T-cell (primary cell): ENCODE measurements at regions of chr1 and their contacts with region 1.

Region 1: DNA sequence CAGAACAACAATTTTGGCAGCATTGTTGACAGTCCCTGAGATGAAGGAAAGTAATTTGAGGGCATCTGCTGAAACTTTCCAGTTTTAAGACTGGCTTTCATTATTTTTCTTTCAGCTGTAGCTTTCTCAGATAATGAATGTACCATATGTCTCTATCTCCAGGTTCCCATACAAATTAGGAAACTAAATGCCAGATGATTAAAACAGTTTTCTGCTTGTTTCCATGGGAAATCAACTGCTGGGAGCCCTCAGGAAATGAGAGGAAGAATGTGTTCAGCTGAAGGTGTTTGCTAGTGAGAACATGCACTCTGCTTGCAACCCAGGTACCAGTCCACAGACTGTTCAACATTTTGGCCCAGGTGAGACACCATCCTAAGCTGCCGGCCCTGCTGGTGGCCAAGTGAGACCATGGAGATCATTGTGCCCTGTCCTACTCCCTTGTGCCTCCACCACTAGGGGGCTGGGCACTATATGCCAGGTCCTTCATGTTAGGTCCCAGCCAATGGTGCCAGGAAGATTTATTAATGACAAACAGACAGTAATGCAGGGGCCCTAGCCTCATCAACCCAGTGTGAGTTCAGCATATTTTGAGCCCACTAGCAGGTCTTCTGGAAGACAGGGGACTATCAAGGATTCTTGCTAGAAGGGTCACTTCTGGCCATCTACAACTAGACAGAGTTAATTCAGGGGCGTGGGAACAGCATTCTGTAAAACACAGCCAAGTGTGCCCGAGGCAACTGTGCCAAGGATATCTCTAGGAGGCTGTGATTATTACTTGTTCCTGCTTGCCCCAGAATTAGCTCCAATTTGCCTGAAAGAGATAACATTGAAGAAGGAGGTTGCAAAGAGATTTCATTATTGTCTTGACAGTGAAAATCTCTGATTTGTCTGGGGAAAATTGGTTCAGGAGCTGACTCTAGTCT is 17.0 kb upstream of the LRRC8C start:
- DNase-seq: peak in 3 of 35 experiments; percentile 7 to 49 (median 21)
- ATAC-seq: no peak
- H3K4me3 ChIP-seq: no peak overlapping the region
- H3K4me3 Mint-ChIP-seq: no peak overlapping the region
- H3K27ac ChIP-seq: no peak overlapping the region
- H3K27ac Mint-ChIP-seq: peak overlapping the region; percentile 67 to 72
- H3K4me1 ChIP-seq: peaks cover 26 to 29% of the 10 kb centered on the region in 2 experiments
- H3K4me1 Mint-ChIP-seq: peaks cover 80 to 88% (median 82%) of the 10 kb centered on the region in 3 donors
- H3K27me3 ChIP-seq: no peaks in the 10 kb centered on the region
- H3K27me3 Mint-ChIP-seq: no peaks in the 10 kb centered on the region

Region 2: GRCh38 chr1:89363638-89364536 is 252.1 kb before region 1 on chr1 and contains the start of gene GBP6:
- CTCF ChIA-PET with region 1: no interaction called
- POLR2A ChIA-PET with region 1: interaction called in 1 of 2 experiments, 16 read pairs
- DNase-seq: no peak
- ATAC-seq: no peak
- H3K4me3 ChIP-seq: no peak within 1 kb of the TSS
- H3K4me3 Mint-ChIP-seq: no peak within 1 kb of the TSS
- H3K27ac ChIP-seq: no peak within 1 kb of the TSS
- H3K27ac Mint-ChIP-seq: peak within 1 kb of the TSS; percentile 7 to 70
- H3K4me1 ChIP-seq: peaks cover 0 to 5% of the 10 kb centered on the region in 2 experiments
- H3K4me1 Mint-ChIP-seq: peaks cover 13 to 14% (median 14%) of the 10 kb centered on the region in 3 donors
- H3K27me3 ChIP-seq: no peaks in the 10 kb centered on the region
- H3K27me3 Mint-ChIP-seq: no peaks in the 10 kb centered on the region
- total RNA-seq, gene GBP6: 0.13 to 0.83 (median 0.18) TPM in 4 of 5 donors, not detected in the other

Region 3: GRCh38 chr1:89589515-89589914 is 26.4 kb before region 1 on chr1:
- CTCF ChIA-PET with region 1: interaction called, 4 to 6 read pairs
- POLR2A ChIA-PET with region 1: interaction called in 1 of 2 experiments, 10 read pairs
- DNase-seq: no peak
- ATAC-seq: no peak
- H3K4me3 ChIP-seq: no peak overlapping the region
- H3K4me3 Mint-ChIP-seq: no peak overlapping the region
- H3K27ac ChIP-seq: no peak overlapping the region
- H3K27ac Mint-ChIP-seq: peak overlapping the region; percentile 36 to 67
- H3K4me1 ChIP-seq: peaks cover 0 to 2% of the 10 kb centered on the region in 2 experiments
- H3K4me1 Mint-ChIP-seq: peaks cover 59 to 69% (median 66%) of the 10 kb centered on the region in 3 donors
- H3K27me3 ChIP-seq: no peaks in the 10 kb centered on the region
- H3K27me3 Mint-ChIP-seq: no peaks in the 10 kb centered on the region

Region 4: DNA sequence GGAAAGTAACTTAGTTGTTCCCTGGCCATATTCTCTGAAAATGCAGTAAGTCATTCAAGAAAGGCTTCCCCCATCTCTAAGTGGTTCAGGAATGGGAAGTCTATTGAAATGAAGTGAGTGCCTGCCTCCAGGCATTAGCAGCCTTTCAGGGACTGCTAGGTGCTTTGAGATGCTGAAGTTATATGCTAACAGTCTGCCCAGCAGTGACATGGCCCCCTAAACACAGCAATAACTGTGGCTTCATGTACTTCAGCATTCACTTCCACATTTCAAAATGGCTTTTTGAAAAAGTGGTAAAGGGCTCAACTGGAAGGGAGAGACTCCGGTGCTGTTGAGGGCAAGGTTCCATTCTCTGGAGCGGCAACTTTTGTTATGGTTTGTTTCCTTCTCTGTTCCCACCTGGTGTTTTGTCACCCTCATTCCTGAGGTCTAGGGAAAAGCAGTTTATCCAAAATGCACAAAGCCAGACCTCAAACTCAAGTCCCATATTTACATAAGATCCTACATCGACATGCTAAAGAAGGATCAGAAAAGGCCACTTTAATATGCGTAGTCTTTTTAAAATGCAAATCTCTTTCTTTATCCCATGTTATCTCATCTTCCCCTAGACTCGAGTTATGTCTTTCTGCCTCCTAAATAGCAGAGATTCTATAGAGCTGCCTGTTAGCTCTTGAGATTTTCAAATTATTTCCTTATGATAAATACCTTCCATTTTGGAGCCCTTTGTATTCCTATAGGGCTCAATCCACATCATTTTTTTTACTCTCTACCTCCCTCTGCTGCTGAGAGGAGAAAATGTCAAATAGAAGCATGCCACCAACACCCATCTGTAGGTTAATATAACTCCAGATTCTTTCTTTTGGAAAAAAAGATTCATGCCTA is 17.2 kb before region 1 on chr1:
- CTCF ChIA-PET with region 1: interaction called, 6 to 12 read pairs
- POLR2A ChIA-PET with region 1: interaction called in 1 of 2 experiments, 4 read pairs
- DNase-seq: peak in 2 of 35 experiments; percentile 35 to 68
- ATAC-seq: peak in 3 of 4 experiments; percentile 50 to 64 (median 57)
- H3K4me3 ChIP-seq: no peak overlapping the region
- H3K4me3 Mint-ChIP-seq: peak overlapping the region in 1 of 3 donors; percentile 4
- H3K27ac ChIP-seq: no peak overlapping the region
- H3K27ac Mint-ChIP-seq: peak overlapping the region; percentile 85 to 87
- H3K4me1 ChIP-seq: peaks cover 18 to 23% of the 10 kb centered on the region in 2 experiments
- H3K4me1 Mint-ChIP-seq: peaks cover 85 to 88% (median 87%) of the 10 kb centered on the region in 3 donors
- H3K27me3 ChIP-seq: no peaks in the 10 kb centered on the region
- H3K27me3 Mint-ChIP-seq: no peaks in the 10 kb centered on the region

Region 5: GRCh38 chr1:89632657-89633247 is 16.8 kb after region 1 on chr1 and contains the start of gene LRRC8C:
- CTCF ChIA-PET with region 1: interaction called, 4 to 45 read pairs
- POLR2A ChIA-PET with region 1: interaction called, 6 to 10 read pairs
- DNase-seq: peak; percentile 72 to 94 (median 86)
- ATAC-seq: peak; percentile 85 to 90 (median 86)
- H3K4me3 ChIP-seq: peak within 1 kb of the TSS; percentile 86 to 99
- H3K4me3 Mint-ChIP-seq: peak within 1 kb of the TSS; percentile 95 to 96 (median 96)
- H3K27ac ChIP-seq: peak within 1 kb of the TSS; percentile 92
- H3K27ac Mint-ChIP-seq: peak within 1 kb of the TSS; percentile 97 to 98
- H3K4me1 ChIP-seq: peaks cover 28 to 60% of the 10 kb centered on the region in 2 experiments
- H3K4me1 Mint-ChIP-seq: peaks cover 76 to 87% (median 79%) of the 10 kb centered on the region in 3 donors
- H3K27me3 ChIP-seq: no peaks in the 10 kb centered on the region
- H3K27me3 Mint-ChIP-seq: no peaks in the 10 kb centered on the region
- total RNA-seq, gene LRRC8C: 33.4 to 48.4 (median 41.9) TPM

Region 6: GRCh38 chr1:89724369-89725010 is 108.6 kb after region 1 on chr1:
- CTCF ChIA-PET with region 1: no interaction called
- POLR2A ChIA-PET with region 1: no interaction called
- DNase-seq: peak in 2 of 35 experiments; percentile 12 to 27
- ATAC-seq: peak in 3 of 4 experiments; percentile 27 to 37 (median 31)
- H3K4me3 ChIP-seq: no peak overlapping the region
- H3K4me3 Mint-ChIP-seq: no peak overlapping the region
- H3K27ac ChIP-seq: no peak overlapping the region
- H3K27ac Mint-ChIP-seq: peak overlapping the region; percentile 63 to 74
- H3K4me1 ChIP-seq: peaks cover 10 to 32% of the 10 kb centered on the region in 2 experiments
- H3K4me1 Mint-ChIP-seq: peaks cover 77 to 86% (median 80%) of the 10 kb centered on the region in 3 donors
- H3K27me3 ChIP-seq: no peaks in the 10 kb centered on the region
- H3K27me3 Mint-ChIP-seq: no peaks in the 10 kb centered on the region